Astrocyte of the cerebellum (primary cell): ENCODE measurements at regions of chr2 and their contacts with region 1.

Region 1: GRCh38 chr2:210099940-210100339 is 71.3 kb downstream of the KANSL1L start:
- DNase-seq: no peak
- H3K4me3 ChIP-seq: no peak overlapping the region
- CTCF ChIP-seq: no peak

Region 2: GRCh38 chr2:209917154-209918047 is 182.5 kb before region 1 on chr2:
- in situ Hi-C with region 1: no loop called
- DNase-seq: no peak
- H3K4me3 ChIP-seq: no peak overlapping the region
- CTCF ChIP-seq: no peak

Region 3: DNA sequence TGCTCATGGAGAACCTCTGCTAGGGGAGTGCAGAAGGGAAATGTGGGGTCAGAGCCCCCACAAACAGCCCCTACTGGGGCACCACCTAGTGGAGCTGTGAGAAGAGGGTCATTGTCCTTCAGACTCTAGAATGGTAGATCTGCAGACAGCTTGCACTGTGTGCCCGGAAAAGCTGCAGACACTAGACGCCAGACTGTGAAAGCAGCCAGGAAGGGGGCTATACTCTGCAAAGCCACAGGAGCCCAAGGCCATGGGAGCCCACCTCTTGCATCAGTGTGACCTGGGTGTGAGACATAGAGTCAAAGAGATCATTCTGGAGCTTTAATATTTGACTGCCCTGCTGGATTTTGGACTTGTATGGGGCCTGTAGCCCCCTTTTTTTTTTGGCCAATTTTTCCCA is 36.6 kb before region 1 on chr2:
- in situ Hi-C with region 1: no loop called
- DNase-seq: no peak
- H3K4me3 ChIP-seq: no peak overlapping the region
- CTCF ChIP-seq: no peak

Region 4: DNA sequence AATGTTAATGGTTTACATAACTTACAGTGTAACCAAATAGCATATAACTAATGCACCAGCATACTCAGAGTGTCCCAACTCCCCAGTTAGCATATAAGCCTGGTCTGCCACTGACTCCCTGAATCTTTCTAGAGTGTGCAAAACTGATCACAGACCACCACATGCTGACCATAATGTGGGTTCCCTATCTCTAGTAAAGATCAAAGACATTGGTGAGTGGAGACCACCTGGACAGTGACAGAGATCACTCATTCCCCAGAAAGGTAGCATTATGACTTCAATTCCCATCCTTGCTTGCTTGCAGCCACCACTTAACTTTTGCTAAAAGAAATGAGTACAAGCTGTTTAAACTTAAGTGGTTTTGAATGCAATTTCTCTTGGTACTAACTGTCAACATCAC is 32.3 kb after region 1 on chr2:
- in situ Hi-C with region 1: loop called (anchors 5 kb)
- DNase-seq: no peak
- H3K4me3 ChIP-seq: no peak overlapping the region
- CTCF ChIP-seq: no peak